ENCODE measurements at regions of chr7 and their contacts with region 1.

Region 1: GRCh38 chr7:146660839-146661238 is 544.2 kb downstream of the CNTNAP2 start:
- DNase-seq: no peak
- H3K4me3 ChIP-seq: no peak overlapping the region
- H3K27ac ChIP-seq: no peak overlapping the region
- H3K4me1 ChIP-seq: no peaks in the 10 kb centered on the region
- H3K27me3 ChIP-seq: no peaks in the 10 kb centered on the region
- CTCF ChIP-seq: no peak

Region 2: DNA sequence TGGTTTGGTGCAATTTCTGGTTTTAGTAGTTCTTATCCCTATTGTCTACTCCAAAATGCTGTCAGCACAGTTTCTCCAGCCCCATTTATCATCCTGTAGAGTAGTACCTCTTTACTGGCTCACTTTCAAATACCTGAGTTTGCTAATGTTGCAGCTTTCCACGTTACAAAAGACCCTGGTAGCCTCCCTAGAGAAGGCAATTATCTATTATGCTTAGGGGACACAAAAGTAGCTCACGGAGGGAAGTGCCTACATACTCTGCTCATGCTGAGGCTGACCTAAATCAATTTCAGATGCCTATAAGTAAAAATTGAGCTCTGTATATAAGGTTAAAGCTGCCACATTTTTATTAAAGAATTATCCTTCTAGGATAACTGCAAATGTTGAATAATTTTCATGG is 59.4 kb after region 1 on chr7:
- intact Hi-C with region 1: no loop called
- DNase-seq: no peak
- H3K4me3 ChIP-seq: no peak overlapping the region
- H3K27ac ChIP-seq: no peak overlapping the region
- H3K4me1 ChIP-seq: no peaks in the 10 kb centered on the region
- H3K27me3 ChIP-seq: no peaks in the 10 kb centered on the region
- CTCF ChIP-seq: no peak

Region 3: GRCh38 chr7:147731311-147731710 is 1070.5 kb after region 1 on chr7:
- intact Hi-C with region 1: loop called (anchors 5 kb)
- DNase-seq: no peak
- H3K4me3 ChIP-seq: no peak overlapping the region
- H3K27ac ChIP-seq: no peak overlapping the region
- H3K4me1 ChIP-seq: no peaks in the 10 kb centered on the region
- H3K27me3 ChIP-seq: no peaks in the 10 kb centered on the region
- CTCF ChIP-seq: no peak

Measured in tibial artery (tissue), 4 donors.